ENCODE measurements at regions of chr17 and their contacts with region 1.

Region 1: GRCh38 chr17:9104370-9105041 is 83.2 kb downstream of the NTN1 start:
- DNase-seq: no peak
- H3K4me3 ChIP-seq: peak overlapping the region in 1 of 4 donors; percentile 5
- H3K27ac ChIP-seq: peak overlapping the region; percentile 78 to 88 (median 84)
- H3K4me1 ChIP-seq: peaks cover 8 to 71% (median 60%) of the 10 kb centered on the region in 4 donors
- H3K27me3 ChIP-seq: no peaks in the 10 kb centered on the region
- CTCF ChIP-seq: peak in 1 of 3 experiments; percentile 33
- EP300 ChIP-seq: peak; percentile 74
- POLR2A ChIP-seq: no peak

Region 2: DNA sequence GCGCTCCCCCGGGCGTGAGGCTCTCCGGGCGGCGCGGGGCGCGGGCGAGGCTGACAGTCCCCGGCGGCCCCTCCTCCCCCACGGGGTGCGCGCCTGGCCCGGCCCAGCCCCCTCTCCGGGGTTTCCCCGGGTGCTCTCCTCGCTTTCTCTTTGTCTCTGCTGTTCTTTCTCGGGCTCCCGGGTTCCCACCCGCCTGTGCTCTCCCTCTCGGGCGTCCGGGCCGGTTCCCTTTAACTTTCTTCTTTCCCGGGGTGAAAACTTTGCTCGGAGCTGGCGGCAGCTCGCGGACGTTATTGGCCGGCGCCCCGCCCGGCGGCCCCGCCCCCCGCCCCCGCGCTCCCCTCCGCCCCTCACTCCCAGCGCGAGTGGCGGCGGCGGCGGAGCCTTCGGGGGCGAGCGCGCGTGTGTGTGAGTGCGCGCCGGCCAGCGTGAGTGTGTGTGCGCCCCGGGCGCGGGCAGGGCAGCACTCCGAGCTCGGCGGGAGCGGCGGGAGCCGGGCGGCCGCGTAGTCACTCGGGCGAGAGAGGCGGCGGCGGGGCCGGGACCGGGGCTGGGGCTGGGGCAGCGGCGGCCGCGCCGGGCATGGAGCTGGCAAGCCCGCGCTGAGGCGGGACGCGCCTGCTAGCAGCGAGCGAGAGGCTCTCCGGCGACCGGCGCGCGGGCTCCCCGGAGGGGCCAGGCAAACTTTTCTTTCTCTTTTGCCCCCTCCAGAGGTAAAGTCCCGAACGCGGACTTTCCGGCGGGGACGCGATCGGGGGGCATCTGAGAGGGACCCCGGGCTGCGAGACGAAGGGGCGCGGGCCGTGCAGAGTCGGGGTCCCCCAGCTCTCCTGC is 83.1 kb before region 1 on chr17 and contains the start of gene NTN1:
- intact Hi-C with region 1: loop called (anchors 5 kb)
- DNase-seq: no peak
- H3K4me3 ChIP-seq: peak within 1 kb of the TSS; percentile 77 to 95 (median 90)
- H3K27ac ChIP-seq: peak within 1 kb of the TSS; percentile 90 to 96 (median 94)
- H3K4me1 ChIP-seq: peaks cover 19 to 59% (median 51%) of the 10 kb centered on the region in 4 donors
- H3K27me3 ChIP-seq: peaks cover 0 to 15% (median 3%) of the 10 kb centered on the region in 4 donors
- CTCF ChIP-seq: no peak
- EP300 ChIP-seq: no peak
- POLR2A ChIP-seq: no peak
- total RNA-seq, gene NTN1: 69.3 to 179 (median 117) TPM

Region 3: DNA sequence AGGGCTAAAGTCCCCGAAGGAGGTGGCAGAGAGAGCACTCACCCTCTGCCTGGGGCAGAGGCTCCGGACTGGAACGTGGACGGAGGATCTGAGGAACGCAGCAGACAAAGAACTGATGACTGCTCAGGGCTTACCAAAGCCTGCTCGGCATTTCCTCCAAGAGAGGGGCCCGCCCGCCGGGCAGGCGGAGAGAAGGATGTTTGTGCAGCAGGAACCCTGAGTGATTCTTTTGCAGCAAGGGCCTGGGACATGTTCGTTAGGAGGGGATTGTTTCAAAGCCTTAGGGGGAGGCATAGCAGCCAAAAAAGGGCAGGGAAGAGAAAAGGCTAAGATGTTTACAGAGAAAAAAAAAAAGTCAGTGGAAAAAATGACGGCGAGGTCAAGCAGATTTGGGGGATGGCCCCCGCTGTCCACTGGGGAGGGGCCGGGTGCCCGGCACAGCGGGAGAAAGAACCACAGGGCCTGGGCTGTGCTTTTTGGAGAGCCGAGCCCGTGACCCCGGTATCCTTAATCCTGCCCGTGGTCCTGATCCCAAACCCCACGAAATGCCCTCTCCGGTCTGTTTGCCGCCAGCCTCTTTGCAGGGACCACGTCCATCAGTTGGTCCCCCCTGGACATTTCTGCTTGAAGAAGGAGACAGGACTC is 46.1 kb after region 1 on chr17:
- intact Hi-C with region 1: no loop called
- DNase-seq: no peak
- H3K4me3 ChIP-seq: no peak overlapping the region
- H3K27ac ChIP-seq: peak overlapping the region; percentile 40 to 71 (median 56)
- H3K4me1 ChIP-seq: peaks cover 0 to 54% (median 40%) of the 10 kb centered on the region in 4 donors
- H3K27me3 ChIP-seq: no peaks in the 10 kb centered on the region
- CTCF ChIP-seq: no peak
- EP300 ChIP-seq: no peak
- POLR2A ChIP-seq: no peak

Region 4: DNA sequence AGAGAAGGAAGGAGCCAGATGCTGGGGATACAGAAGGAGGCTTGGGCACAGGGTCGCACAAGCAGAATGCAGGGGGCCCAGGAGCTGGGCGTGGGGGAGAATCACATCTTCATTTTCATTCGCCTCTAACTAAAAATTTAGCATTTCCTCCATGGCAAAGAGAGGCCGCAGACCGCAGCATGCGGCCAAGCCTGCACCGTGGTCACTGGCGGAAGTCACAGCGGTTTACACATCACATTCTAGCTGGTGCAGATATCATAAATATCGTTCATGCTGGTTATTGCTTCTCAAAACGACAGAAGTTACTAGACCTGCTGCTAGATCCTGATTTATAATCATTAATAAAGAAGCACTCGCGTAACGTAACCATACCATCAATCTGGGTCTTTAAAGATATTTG is 78.8 kb after region 1 on chr17:
- intact Hi-C with region 1: no loop called
- DNase-seq: no peak
- H3K4me3 ChIP-seq: no peak overlapping the region
- H3K27ac ChIP-seq: no peak overlapping the region
- H3K4me1 ChIP-seq: peaks cover 0 to 50% (median 39%) of the 10 kb centered on the region in 4 donors
- H3K27me3 ChIP-seq: no peaks in the 10 kb centered on the region
- CTCF ChIP-seq: no peak
- EP300 ChIP-seq: no peak
- POLR2A ChIP-seq: no peak

Measured in esophagus muscularis mucosa (tissue), 4 donors.